K562 (cell line): ENCODE measurements at regions of chr1 and their contacts with region 1.

Region 1: GRCh38 chr1:39098546-39099250 is 72.5 kb downstream of the NDUFS5 start:
- DNase-seq: peak; percentile 80 to 83 (median 83)
- ATAC-seq: peak; percentile 83
- H3K4me3 ChIP-seq: no peak overlapping the region
- H3K27ac ChIP-seq: no peak overlapping the region
- H3K4me1 ChIP-seq: peaks cover 0 to 10% of the 10 kb centered on the region in 2 experiments; a peak in 3 of 5 replicates
- H3K27me3 ChIP-seq: no peaks in the 10 kb centered on the region
- CTCF ChIP-seq: peak; percentile 89 to 96 (median 89)
- EP300 ChIP-seq: no peak
- POLR2A ChIP-seq: no peak
- RAD21 ChIP-seq: peak; percentile 90 to 91

Region 2: DNA sequence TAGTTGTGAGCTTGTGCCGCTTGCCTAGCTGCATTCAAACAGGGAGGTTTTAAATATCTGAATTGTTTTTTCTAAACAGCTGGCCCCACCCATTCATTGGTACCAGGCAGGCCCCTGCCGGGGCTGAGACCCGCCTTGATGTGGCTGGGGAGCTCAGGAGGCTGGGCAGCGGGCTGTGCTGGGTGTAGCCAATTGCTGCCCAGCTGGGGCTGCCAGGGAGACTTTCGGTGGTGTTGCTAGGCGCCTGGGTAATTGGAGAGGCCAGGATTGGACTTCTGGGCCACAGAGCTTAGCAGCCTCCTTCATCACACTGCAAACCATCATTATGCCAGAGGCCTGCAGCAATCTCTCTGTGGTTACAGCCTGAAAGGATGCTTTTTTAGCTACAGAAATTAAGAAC is 169.2 kb before region 1 on chr1:
- CTCF ChIA-PET with region 1: no interaction called
- POLR2A ChIA-PET with region 1: no interaction called
- in situ Hi-C with region 1: no loop called
- intact Hi-C with region 1: no loop called
- DNase-seq: no peak
- ATAC-seq: no peak
- H3K4me3 ChIP-seq: no peak overlapping the region
- H3K27ac ChIP-seq: no peak overlapping the region
- H3K4me1 ChIP-seq: peaks cover 0 to 4% of the 10 kb centered on the region in 2 experiments; a peak in 1 of 5 replicates
- H3K27me3 ChIP-seq: peaks cover 0 to 7% of the 10 kb centered on the region in 2 experiments; a peak in 1 of 5 replicates
- CTCF ChIP-seq: no peak
- EP300 ChIP-seq: no peak
- POLR2A ChIP-seq: no peak
- RAD21 ChIP-seq: no peak

Region 3: DNA sequence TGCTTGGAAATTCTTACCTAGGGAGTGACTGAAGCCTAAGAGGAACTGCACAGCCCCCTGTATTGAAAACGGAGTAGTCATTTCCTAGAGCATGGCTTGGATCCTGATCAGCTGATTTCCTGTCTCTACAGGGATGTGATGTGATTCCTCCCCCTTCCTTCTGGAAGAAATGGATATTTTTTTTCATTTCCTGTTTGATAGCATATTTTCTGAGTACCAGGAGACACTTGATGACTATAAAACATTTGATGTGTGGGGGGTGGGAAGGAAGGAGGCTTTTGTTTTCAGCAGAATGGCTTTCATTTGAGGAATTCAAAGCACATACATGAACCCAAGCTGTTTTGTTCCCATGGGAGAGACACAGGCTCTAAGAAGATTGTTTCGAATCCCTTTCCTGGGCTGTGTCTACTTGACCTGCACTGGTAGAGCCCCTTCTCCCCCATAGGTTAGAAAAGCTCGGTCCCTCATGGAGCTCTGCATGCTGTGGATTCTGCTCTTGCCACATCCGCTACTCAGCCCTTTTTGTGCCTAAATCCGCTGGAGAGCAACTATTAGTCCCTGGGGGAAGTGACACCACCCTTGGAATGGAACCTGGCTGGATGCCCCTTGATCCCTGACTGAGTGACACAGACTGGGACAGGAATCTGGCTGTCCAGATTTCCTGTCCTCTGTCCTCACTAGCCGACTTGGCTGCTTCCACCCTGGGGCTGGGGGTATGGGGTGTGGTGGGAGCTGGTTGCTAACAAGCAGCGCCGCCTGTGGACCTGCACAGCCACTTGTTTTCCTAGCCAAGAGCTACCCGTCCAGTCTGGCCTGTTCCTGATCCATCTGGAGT is 34.0 kb after region 1 on chr1:
- CTCF ChIA-PET with region 1: interaction called, 3 read pairs
- POLR2A ChIA-PET with region 1: interaction called, 4 read pairs
- in situ Hi-C with region 1: no loop called
- intact Hi-C with region 1: loop called (anchors 2 kb)
- DNase-seq: peak in 2 of 4 experiments; percentile 29 to 48
- ATAC-seq: peak; percentile 83
- H3K4me3 ChIP-seq: no peak overlapping the region
- H3K27ac ChIP-seq: no peak overlapping the region
- H3K4me1 ChIP-seq: peaks cover 0 to 13% of the 10 kb centered on the region in 2 experiments; a peak in 3 of 5 replicates
- H3K27me3 ChIP-seq: no peaks in the 10 kb centered on the region
- CTCF ChIP-seq: peak; percentile 18 to 33 (median 32); a peak in 2 of 6 replicates
- EP300 ChIP-seq: no peak
- POLR2A ChIP-seq: no peak
- RAD21 ChIP-seq: peak in 1 of 2 experiments; percentile 29; a peak in 1 of 4 replicates

Region 4: GRCh38 chr1:39196244-39197215 is 97.8 kb after region 1 on chr1:
- CTCF ChIA-PET with region 1: interaction called, 24 read pairs
- POLR2A ChIA-PET with region 1: interaction called, 4 read pairs
- in situ Hi-C with region 1: no loop called
- intact Hi-C with region 1: loop called (anchors 1 kb)
- DNase-seq: peak; percentile 41 to 84 (median 62)
- ATAC-seq: peak; percentile 75
- H3K4me3 ChIP-seq: no peak overlapping the region
- H3K27ac ChIP-seq: peak overlapping the region; percentile 72
- H3K4me1 ChIP-seq: peaks cover 22 to 40% of the 10 kb centered on the region in 2 experiments
- H3K27me3 ChIP-seq: no peaks in the 10 kb centered on the region
- CTCF ChIP-seq: no peak
- EP300 ChIP-seq: peak; percentile 81; the same call in 1 of the 2 replicates
- POLR2A ChIP-seq: no peak
- RAD21 ChIP-seq: 0 out of 4 replicates have a peak, but pooled peaks have one; percentile 6 to 28

Region 5: DNA sequence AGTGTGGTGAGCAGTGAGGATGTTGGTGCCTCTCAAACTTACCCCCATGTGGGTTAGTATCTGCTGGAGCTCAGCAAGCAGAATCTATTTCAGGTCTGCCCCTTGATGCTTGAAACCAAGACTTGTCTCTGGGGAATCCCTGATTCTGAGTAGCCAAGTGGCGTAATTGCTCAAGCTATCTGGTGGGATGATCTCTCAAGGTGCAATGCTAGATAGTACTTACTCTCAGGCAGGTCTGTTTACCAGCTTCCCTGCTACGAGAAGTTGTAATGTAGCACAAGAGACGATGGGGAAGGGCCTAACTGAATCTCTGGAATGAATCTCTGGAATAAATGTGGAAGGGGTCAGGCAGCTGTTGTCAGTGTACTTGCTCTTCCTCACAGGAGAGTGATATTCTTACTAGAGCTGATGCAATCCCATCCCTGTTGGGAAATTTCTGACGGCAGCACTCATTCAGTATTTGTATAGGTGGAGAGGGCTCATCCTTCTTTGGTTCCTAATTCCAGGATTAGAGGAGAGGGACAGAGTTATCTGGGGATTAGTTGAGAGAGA is 171.2 kb after region 1 on chr1:
- CTCF ChIA-PET with region 1: no interaction called
- POLR2A ChIA-PET with region 1: no interaction called
- in situ Hi-C with region 1: no loop called
- intact Hi-C with region 1: no loop called
- DNase-seq: peak in 1 of 4 experiments; percentile 49
- ATAC-seq: peak; percentile 64
- H3K4me3 ChIP-seq: no peak overlapping the region
- H3K27ac ChIP-seq: no peak overlapping the region; the same call in 2 of the 3 replicates
- H3K4me1 ChIP-seq: peaks cover 20 to 36% of the 10 kb centered on the region in 2 experiments
- H3K27me3 ChIP-seq: no peaks in the 10 kb centered on the region
- CTCF ChIP-seq: no peak
- EP300 ChIP-seq: peak; percentile 57; the same call in 1 of the 2 replicates
- POLR2A ChIP-seq: no peak
- RAD21 ChIP-seq: peak in 1 of 2 experiments; percentile 11; a peak in 1 of 4 replicates

Region 6: DNA sequence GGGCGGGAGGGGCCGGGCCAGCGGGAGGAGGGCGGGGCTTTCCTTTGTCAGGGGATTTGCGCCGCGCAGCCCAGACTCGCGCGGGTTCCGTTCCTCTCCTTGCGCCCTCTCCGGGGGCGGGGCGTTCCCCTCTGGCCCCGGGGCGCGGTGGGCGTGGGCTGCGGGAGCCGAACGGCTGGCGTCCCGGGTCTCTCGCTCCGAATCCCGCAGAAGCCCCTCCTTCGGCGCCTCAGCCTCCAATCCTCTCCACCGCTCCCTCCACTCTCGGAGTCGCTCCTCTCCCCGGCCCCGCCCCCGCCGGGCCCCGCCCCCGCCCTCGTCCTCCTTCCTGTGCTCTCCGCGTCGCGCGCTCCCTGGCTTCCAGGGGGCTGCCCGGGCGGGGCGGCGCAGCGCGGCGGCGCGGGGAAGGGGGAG is 309.9 kb after region 1 on chr1:
- CTCF ChIA-PET with region 1: no interaction called
- POLR2A ChIA-PET with region 1: no interaction called
- in situ Hi-C with region 1: no loop called
- intact Hi-C with region 1: loop called (anchors 10 kb)
- DNase-seq: peak; percentile 97 to 99 (median 98)
- ATAC-seq: peak; percentile 91
- H3K4me3 ChIP-seq: peak overlapping the region; percentile 81
- H3K27ac ChIP-seq: peak overlapping the region; percentile 73
- H3K4me1 ChIP-seq: peaks cover 21 to 36% of the 10 kb centered on the region in 2 experiments; a peak in 4 of 5 replicates
- H3K27me3 ChIP-seq: no peaks in the 10 kb centered on the region
- CTCF ChIP-seq: no peak
- EP300 ChIP-seq: no peak
- POLR2A ChIP-seq: no peak
- RAD21 ChIP-seq: no peak

Region 7: GRCh38 chr1:39711104-39711965 is 612.6 kb after region 1 on chr1:
- CTCF ChIA-PET with region 1: no interaction called
- POLR2A ChIA-PET with region 1: no interaction called
- in situ Hi-C with region 1: no loop called
- intact Hi-C with region 1: loop called (anchors 10 kb)
- DNase-seq: peak; percentile 87 to 96 (median 88)
- ATAC-seq: peak; percentile 98
- H3K4me3 ChIP-seq: no peak overlapping the region
- H3K27ac ChIP-seq: peak overlapping the region; percentile 70
- H3K4me1 ChIP-seq: peaks cover 22 to 24% of the 10 kb centered on the region in 2 experiments; a peak in 4 of 5 replicates
- H3K27me3 ChIP-seq: no peaks in the 10 kb centered on the region
- CTCF ChIP-seq: peak; percentile 76 to 90 (median 88)
- EP300 ChIP-seq: peak; percentile 97
- POLR2A ChIP-seq: no peak
- RAD21 ChIP-seq: peak in 1 of 2 experiments; percentile 54; a peak in 3 of 4 replicates